ENCODE measurements at regions of chr1 and their contacts with region 1.

Region 1: GRCh38 chr1:42913426-42914091 is 45.1 kb downstream of the SLC2A1 start:
- DNase-seq: no peak
- ATAC-seq: peak; percentile 56

Region 2: DNA sequence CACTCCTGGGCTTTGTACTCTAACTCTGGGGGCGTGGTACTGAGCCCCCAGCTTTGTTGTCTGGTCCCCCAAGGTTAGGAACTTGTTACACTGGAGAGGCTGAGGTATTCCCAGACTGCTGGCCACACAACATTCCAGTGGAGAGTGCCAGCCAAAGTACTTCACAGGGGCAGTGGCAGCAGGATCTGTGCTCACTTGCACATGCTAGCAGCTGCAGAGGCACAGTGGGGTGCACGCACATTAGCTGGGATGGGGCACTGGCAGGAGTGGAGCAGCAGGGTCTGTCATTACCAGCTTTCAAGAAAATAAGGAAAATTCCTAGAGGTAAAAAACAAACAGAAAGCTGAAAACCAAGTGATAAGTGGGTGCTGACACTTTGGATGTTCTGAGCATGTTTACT is 36.2 kb before region 1 on chr1:
- intact Hi-C with region 1: no loop called
- DNase-seq: peak; percentile 35
- ATAC-seq: peak; percentile 60

Region 3: DNA sequence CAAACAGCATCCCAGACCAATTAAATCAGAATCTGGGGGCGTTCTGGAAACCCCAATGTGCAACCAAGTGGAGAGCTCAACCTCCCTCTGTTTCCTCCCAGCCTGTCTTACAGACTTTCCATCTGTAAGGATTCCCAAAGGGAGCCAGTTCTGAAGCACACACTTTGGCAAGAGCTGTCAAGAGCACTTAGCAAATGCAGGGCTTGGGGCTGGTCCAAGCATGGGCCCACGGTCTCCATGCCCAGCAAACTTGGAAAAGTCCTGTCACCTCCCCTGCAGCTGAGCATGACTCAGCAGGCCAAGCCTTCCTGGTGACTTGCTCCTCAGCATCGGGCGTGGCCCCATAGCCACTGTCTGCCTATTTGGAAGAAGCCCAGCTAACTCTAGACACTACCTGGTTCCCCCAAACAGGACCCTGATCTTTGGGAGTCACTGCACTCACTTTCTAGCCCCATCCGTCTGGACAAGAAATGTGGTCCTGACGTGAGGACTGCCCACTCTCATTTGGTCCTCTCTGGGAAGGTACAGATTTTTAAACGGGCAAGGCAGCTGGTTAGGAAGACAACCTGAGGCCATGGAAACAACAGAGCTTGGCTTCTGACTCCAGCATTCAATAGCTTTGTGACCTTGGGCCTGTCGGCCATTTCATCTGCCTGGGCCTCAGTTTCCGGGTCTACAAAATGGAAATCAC is 28.2 kb after region 1 on chr1:
- intact Hi-C with region 1: no loop called
- DNase-seq: peak; percentile 87
- ATAC-seq: peak; percentile 71

Region 4: DNA sequence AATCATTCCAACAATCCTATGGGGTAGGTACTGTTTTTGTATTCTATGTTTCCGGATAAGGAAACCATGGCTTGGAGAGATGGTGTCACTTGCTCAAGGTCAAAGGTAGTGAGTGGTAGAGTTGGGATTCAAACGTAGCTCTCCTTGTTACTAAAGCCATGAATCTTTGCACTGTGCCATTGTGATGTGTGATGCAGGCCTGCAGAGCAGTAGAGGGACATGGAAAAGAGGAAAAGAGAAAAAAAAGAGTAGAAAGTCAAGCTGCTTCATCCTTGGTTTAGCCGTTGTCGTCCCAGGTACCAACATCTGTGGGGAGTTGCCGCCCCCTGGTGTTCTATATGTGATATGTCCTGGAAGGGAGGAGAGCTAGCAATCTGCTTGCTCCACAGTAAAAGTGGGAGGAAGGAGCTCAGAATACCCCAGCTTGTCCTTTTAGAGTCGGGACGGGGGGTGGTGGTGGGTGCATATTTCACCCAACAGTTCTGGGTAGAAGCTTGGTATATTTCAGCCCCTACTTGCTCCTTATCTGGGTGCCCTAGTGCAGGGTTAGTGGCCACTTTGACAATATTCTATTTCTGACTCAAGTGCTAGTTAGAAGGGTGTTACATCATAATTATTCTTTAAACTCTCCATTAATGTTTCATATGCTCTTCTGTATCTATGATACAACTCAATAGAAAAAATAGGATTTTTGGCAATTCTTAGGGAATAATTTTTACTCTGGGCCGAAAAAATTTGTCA is 160.1 kb after region 1 on chr1:
- intact Hi-C with region 1: loop called (anchors 5 kb)
- DNase-seq: peak; percentile 68
- ATAC-seq: peak; percentile 92

Measured in left ventricle myocardium superior (tissue), 1 donor.